GM12878 (cell line): ENCODE measurements at regions of chr4 and their contacts with region 1.

Region 1: GRCh38 chr4:113958766-113959538 is 20.5 kb downstream of the ARSJ start:
- DNase-seq: no peak
- ATAC-seq: peak; percentile 81
- H3K4me3 ChIP-seq: no peak overlapping the region
- H3K27ac ChIP-seq: no peak overlapping the region
- H3K4me1 ChIP-seq: no peaks in the 10 kb centered on the region
- H3K27me3 ChIP-seq: no peaks in the 10 kb centered on the region; a peak in 1 of 4 replicates
- CTCF ChIP-seq: no peak
- EP300 ChIP-seq: no peak
- POLR2A ChIP-seq: no peak
- RAD21 ChIP-seq: no peak

Region 2: DNA sequence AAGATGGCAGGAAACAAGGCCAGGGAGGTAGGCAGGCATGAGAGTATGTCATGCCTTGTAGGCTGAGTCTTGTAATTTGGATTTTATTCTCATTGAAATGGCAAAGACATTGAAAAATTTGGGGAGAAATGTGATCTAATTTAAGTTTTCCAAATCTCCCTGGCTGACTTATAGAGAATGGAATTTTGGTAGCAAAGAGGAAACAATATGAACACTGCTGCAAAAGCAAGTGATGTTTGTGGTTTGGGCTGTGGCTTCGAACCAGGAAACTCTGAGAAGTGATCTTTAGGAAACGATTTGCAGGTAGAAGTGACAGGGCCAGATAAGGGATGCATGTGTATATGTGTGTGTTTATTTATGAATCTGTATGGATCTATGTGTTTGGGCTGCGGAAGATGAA is 15.1 kb before region 1 on chr4:
- CTCF ChIA-PET with region 1: interaction called, 7 read pairs
- POLR2A ChIA-PET with region 1: no interaction called
- RAD21 ChIA-PET with region 1: no interaction called
- SMC1A ChIA-PET with region 1: interaction called, 12 read pairs
- in situ Hi-C with region 1: no loop called
- intact Hi-C with region 1: no loop called
- DNase-seq: no peak
- ATAC-seq: no peak
- H3K4me3 ChIP-seq: no peak overlapping the region
- H3K27ac ChIP-seq: no peak overlapping the region
- H3K4me1 ChIP-seq: no peaks in the 10 kb centered on the region
- H3K27me3 ChIP-seq: no peaks in the 10 kb centered on the region
- CTCF ChIP-seq: no peak
- EP300 ChIP-seq: no peak
- POLR2A ChIP-seq: no peak
- RAD21 ChIP-seq: no peak

Region 3: GRCh38 chr4:113971706-113972360 is 12.9 kb after region 1 on chr4:
- CTCF ChIA-PET with region 1: no interaction called
- POLR2A ChIA-PET with region 1: interaction called, 3 read pairs
- RAD21 ChIA-PET with region 1: interaction called, 3 read pairs
- SMC1A ChIA-PET with region 1: interaction called, 11 read pairs
- in situ Hi-C with region 1: no loop called
- intact Hi-C with region 1: no loop called
- DNase-seq: no peak
- ATAC-seq: no peak
- H3K4me3 ChIP-seq: no peak overlapping the region
- H3K27ac ChIP-seq: no peak overlapping the region
- H3K4me1 ChIP-seq: no peaks in the 10 kb centered on the region
- H3K27me3 ChIP-seq: no peaks in the 10 kb centered on the region
- CTCF ChIP-seq: no peak
- EP300 ChIP-seq: no peak
- POLR2A ChIP-seq: no peak
- RAD21 ChIP-seq: no peak

Region 4: GRCh38 chr4:114005569-114006442 is 46.9 kb after region 1 on chr4:
- CTCF ChIA-PET with region 1: no interaction called
- POLR2A ChIA-PET with region 1: no interaction called
- RAD21 ChIA-PET with region 1: no interaction called
- SMC1A ChIA-PET with region 1: no interaction called
- in situ Hi-C with region 1: no loop called
- intact Hi-C with region 1: no loop called
- DNase-seq: no peak
- ATAC-seq: no peak
- H3K4me3 ChIP-seq: no peak overlapping the region
- H3K27ac ChIP-seq: no peak overlapping the region
- H3K4me1 ChIP-seq: no peaks in the 10 kb centered on the region
- H3K27me3 ChIP-seq: no peaks in the 10 kb centered on the region
- CTCF ChIP-seq: no peak
- EP300 ChIP-seq: no peak
- POLR2A ChIP-seq: no peak
- RAD21 ChIP-seq: no peak

Region 5: GRCh38 chr4:114025176-114025777 is 66.3 kb after region 1 on chr4:
- CTCF ChIA-PET with region 1: interaction called, 5 read pairs
- POLR2A ChIA-PET with region 1: interaction called, 6 read pairs
- RAD21 ChIA-PET with region 1: interaction called, 8 read pairs
- SMC1A ChIA-PET with region 1: interaction called, 17 read pairs
- in situ Hi-C with region 1: no loop called
- intact Hi-C with region 1: no loop called
- DNase-seq: peak; percentile 33
- ATAC-seq: peak; percentile 92
- H3K4me3 ChIP-seq: no peak overlapping the region
- H3K27ac ChIP-seq: no peak overlapping the region
- H3K4me1 ChIP-seq: peaks cover 4% of the 10 kb centered on the region
- H3K27me3 ChIP-seq: no peaks in the 10 kb centered on the region
- CTCF ChIP-seq: no peak
- EP300 ChIP-seq: peak in 1 of 2 experiments; percentile 70; a peak in 1 of 4 replicates
- POLR2A ChIP-seq: no peak
- RAD21 ChIP-seq: no peak

Region 6: DNA sequence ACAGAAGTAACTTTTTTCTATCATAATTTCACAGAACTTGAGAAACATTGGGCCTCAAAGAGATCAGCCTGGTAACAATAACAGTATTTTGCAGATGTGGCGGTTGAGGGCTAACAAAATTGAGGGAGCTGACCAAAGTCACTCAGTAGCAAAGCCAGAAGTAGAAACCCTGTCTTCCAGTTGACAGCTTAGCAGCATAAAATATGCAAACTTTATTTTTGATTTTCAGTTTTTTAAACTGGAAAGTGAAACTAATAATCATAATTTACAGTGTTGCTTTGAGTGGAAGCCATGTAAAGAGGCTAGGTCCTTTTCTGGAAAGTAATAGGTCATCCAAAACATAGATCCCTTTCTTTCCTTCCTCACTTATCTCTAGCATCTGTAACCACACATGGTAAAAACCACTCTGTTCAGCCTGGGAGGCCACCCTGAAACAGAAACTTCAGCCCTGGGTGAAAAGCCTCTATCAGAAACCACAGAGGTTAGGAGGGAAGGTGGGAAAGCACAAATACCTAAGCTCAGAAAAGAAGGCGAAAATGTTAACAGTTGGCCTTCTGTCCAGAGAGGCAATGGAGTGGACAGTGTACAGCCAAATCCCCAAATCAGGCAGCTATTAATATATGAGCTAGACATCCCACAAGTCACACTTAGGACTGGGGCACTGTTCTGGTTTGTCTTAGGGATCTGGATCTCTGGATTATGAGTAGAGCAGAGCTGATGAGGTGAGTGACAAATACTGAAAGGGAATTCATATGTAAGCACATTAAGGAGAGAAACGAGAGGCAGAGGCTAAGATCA is 81.6 kb after region 1 on chr4:
- CTCF ChIA-PET with region 1: interaction called, 5 read pairs
- POLR2A ChIA-PET with region 1: no interaction called
- RAD21 ChIA-PET with region 1: interaction called, 6 read pairs
- SMC1A ChIA-PET with region 1: interaction called, 10 read pairs
- in situ Hi-C with region 1: no loop called
- intact Hi-C with region 1: no loop called
- DNase-seq: peak; percentile 36
- ATAC-seq: peak; percentile 90
- H3K4me3 ChIP-seq: no peak overlapping the region
- H3K27ac ChIP-seq: no peak overlapping the region
- H3K4me1 ChIP-seq: peaks cover 14% of the 10 kb centered on the region
- H3K27me3 ChIP-seq: no peaks in the 10 kb centered on the region
- CTCF ChIP-seq: no peak
- EP300 ChIP-seq: no peak
- POLR2A ChIP-seq: no peak
- RAD21 ChIP-seq: no peak

Region 7: GRCh38 chr4:114057746-114058145 is 98.8 kb after region 1 on chr4:
- CTCF ChIA-PET with region 1: no interaction called
- POLR2A ChIA-PET with region 1: no interaction called
- RAD21 ChIA-PET with region 1: no interaction called
- SMC1A ChIA-PET with region 1: interaction called, 10 read pairs
- in situ Hi-C with region 1: no loop called
- intact Hi-C with region 1: no loop called
- DNase-seq: no peak
- ATAC-seq: no peak
- H3K4me3 ChIP-seq: no peak overlapping the region
- H3K27ac ChIP-seq: no peak overlapping the region
- H3K4me1 ChIP-seq: no peaks in the 10 kb centered on the region
- H3K27me3 ChIP-seq: no peaks in the 10 kb centered on the region
- CTCF ChIP-seq: no peak
- EP300 ChIP-seq: no peak
- POLR2A ChIP-seq: no peak
- RAD21 ChIP-seq: no peak

Region 8: GRCh38 chr4:114077610-114078009 is 118.7 kb after region 1 on chr4:
- CTCF ChIA-PET with region 1: interaction called, 94 read pairs
- POLR2A ChIA-PET with region 1: interaction called, 3 read pairs
- RAD21 ChIA-PET with region 1: interaction called, 60 read pairs
- SMC1A ChIA-PET with region 1: interaction called, 145 read pairs
- in situ Hi-C with region 1: no loop called
- intact Hi-C with region 1: no loop called
- DNase-seq: no peak
- ATAC-seq: no peak
- H3K4me3 ChIP-seq: no peak overlapping the region
- H3K27ac ChIP-seq: no peak overlapping the region
- H3K4me1 ChIP-seq: no peaks in the 10 kb centered on the region
- H3K27me3 ChIP-seq: no peaks in the 10 kb centered on the region
- CTCF ChIP-seq: no peak
- EP300 ChIP-seq: no peak
- POLR2A ChIP-seq: no peak
- RAD21 ChIP-seq: no peak

Region 9: GRCh38 chr4:114173968-114174367 is 215.0 kb after region 1 on chr4:
- CTCF ChIA-PET with region 1: no interaction called
- POLR2A ChIA-PET with region 1: no interaction called
- RAD21 ChIA-PET with region 1: no interaction called
- SMC1A ChIA-PET with region 1: no interaction called
- in situ Hi-C with region 1: no loop called
- intact Hi-C with region 1: no loop called
- DNase-seq: no peak
- ATAC-seq: no peak
- H3K4me3 ChIP-seq: no peak overlapping the region
- H3K27ac ChIP-seq: no peak overlapping the region
- H3K4me1 ChIP-seq: no peaks in the 10 kb centered on the region
- H3K27me3 ChIP-seq: no peaks in the 10 kb centered on the region
- CTCF ChIP-seq: no peak
- EP300 ChIP-seq: no peak
- POLR2A ChIP-seq: no peak
- RAD21 ChIP-seq: no peak